ENCODE measurements at regions of chr11 and their contacts with region 1.

Region 1: DNA sequence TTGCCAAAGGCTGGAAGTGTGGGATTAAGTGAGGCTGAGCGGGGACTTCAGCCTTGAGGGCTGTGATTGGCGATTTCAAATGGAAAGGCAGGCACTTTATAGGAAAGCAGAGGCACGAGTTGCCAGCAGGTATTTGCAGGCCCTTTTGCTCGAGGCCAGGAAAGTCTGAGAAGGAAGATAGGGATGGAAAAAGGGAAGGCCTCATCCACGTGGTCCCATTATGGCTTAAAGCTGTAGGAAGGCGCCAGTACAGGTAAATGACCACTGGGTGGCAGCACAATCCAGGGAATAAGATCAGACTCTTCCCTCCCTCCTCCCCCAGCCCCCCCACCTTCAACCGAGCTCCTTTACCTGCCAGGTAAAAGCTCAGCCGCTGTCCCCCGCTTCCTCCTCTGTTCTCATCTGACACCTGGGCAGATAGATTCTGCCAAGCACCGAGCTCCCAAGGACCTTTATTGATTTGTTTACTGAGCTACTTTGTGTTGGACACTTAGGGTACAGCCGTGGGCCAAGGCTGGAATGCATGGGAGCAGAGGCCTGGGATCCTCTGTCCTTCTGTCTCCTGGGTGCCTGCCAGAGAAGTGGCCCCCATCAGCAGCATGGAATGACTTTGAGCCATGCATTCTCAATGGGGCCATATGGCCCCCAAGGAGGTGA is 7.5 kb downstream of the P2RX3 start:
- DNase-seq: peak; percentile 82
- H3K4me3 ChIP-seq: no peak overlapping the region
- H3K27ac ChIP-seq: no peak overlapping the region
- H3K4me1 ChIP-seq: no peaks in the 10 kb centered on the region
- H3K27me3 ChIP-seq: no peaks in the 10 kb centered on the region
- CTCF ChIP-seq: peak; percentile 84

Region 2: DNA sequence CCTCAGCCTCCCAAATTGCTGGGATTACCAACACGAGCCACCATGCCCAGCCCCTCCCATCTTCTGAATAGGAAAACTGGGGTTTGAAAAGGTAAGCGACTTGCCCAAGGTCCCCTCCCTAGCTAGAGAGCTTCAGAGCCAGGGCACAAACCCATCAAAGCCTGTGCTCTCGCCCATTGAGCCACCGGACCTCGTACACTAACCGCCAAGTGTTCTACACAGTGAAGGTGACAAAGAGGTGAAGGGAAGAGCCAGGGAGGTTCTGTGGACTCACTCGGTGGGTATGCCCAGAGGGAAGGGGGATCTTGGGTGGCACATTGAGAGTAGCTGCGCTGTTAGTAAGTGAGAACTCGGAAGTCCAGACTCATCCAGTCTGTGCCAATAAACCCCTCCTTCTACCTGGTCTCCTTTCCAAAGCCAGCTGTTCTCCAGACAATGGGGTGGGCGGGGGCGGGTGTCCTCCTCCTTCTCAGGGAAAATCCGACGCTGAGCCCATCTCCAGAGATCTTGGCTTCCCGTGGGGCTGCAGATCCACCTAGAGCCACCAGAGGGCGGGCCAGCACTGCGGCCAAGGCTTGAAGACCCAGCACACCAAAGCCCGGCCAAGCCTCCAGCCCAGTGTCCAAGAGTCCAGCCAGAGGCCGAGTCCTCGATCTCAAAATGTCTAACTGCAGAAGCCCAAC is 111.4 kb after region 1 on chr11:
- CTCF ChIA-PET with region 1: interaction called, 21 read pairs
- POLR2A ChIA-PET with region 1: no interaction called
- intact Hi-C with region 1: no loop called
- DNase-seq: peak; percentile 86
- H3K4me3 ChIP-seq: no peak overlapping the region
- H3K27ac ChIP-seq: no peak overlapping the region
- H3K4me1 ChIP-seq: peaks cover 27% of the 10 kb centered on the region
- H3K27me3 ChIP-seq: peaks cover 30% of the 10 kb centered on the region
- CTCF ChIP-seq: peak; percentile 99

Region 3: GRCh38 chr11:57480409-57481137 is 134.9 kb after region 1 on chr11:
- CTCF ChIA-PET with region 1: interaction called, 3 read pairs
- POLR2A ChIA-PET with region 1: interaction called, 8 read pairs
- intact Hi-C with region 1: loop called (anchors 2 kb)
- DNase-seq: peak; percentile 87
- H3K4me3 ChIP-seq: no peak overlapping the region
- H3K27ac ChIP-seq: no peak overlapping the region
- H3K4me1 ChIP-seq: peaks cover 16% of the 10 kb centered on the region
- H3K27me3 ChIP-seq: peaks cover 4% of the 10 kb centered on the region
- CTCF ChIP-seq: peak; percentile 96

Region 4: GRCh38 chr11:57530596-57531507 is 185.2 kb after region 1 on chr11 and contains the start of gene TIMM10:
- CTCF ChIA-PET with region 1: interaction called, 3 read pairs
- POLR2A ChIA-PET with region 1: no interaction called
- intact Hi-C with region 1: loop called (anchors 1 kb)
- DNase-seq: peak; percentile 100
- H3K4me3 ChIP-seq: peak within 1 kb of the TSS; percentile 95
- H3K27ac ChIP-seq: peak within 1 kb of the TSS; percentile 83
- H3K4me1 ChIP-seq: peaks cover 12% of the 10 kb centered on the region
- H3K27me3 ChIP-seq: no peaks in the 10 kb centered on the region
- CTCF ChIP-seq: no peak
- total RNA-seq, gene TIMM10: 165 and 176 TPM in 2 replicates

Region 5: GRCh38 chr11:58286249-58286648 is 940.6 kb after region 1 on chr11:
- CTCF ChIA-PET with region 1: no interaction called
- POLR2A ChIA-PET with region 1: no interaction called
- intact Hi-C with region 1: loop called (anchors 5 kb)
- DNase-seq: peak; percentile 54
- H3K4me3 ChIP-seq: no peak overlapping the region
- H3K27ac ChIP-seq: no peak overlapping the region
- H3K4me1 ChIP-seq: no peaks in the 10 kb centered on the region
- H3K27me3 ChIP-seq: no peaks in the 10 kb centered on the region
- CTCF ChIP-seq: peak; percentile 82

Region 6: GRCh38 chr11:58513747-58514367 is 1168.2 kb after region 1 on chr11:
- CTCF ChIA-PET with region 1: no interaction called
- POLR2A ChIA-PET with region 1: no interaction called
- intact Hi-C with region 1: loop called (anchors 2 kb)
- DNase-seq: peak; percentile 78
- H3K4me3 ChIP-seq: no peak overlapping the region
- H3K27ac ChIP-seq: no peak overlapping the region
- H3K4me1 ChIP-seq: no peaks in the 10 kb centered on the region
- H3K27me3 ChIP-seq: peaks cover 6% of the 10 kb centered on the region
- CTCF ChIP-seq: peak; percentile 80